ENCODE measurements at regions of chr2 and their contacts with region 1.

Region 1: DNA sequence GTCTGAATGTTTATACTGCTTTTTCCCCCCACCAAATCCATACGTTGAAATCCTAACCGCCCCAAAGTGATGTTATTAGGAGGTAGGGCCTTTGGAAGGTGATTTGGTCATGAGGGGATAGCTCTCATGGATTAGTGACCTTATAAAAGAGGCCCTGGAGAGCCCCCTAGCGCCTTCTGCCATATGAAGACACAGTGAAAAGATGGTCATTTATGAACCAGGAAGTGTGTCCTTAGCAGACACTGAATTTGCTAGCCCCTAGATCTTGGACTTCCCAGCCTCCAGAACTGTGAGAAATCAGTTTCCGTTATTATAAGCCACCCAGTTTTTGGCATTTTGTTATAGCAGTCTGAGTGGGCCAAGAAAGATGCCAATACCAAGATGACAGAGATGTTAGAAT is 7.2 kb upstream of the TSN start:
- DNase-seq: no peak
- H3K4me3 ChIP-seq: no peak overlapping the region
- CTCF ChIP-seq: peak; percentile 3

Region 2: DNA sequence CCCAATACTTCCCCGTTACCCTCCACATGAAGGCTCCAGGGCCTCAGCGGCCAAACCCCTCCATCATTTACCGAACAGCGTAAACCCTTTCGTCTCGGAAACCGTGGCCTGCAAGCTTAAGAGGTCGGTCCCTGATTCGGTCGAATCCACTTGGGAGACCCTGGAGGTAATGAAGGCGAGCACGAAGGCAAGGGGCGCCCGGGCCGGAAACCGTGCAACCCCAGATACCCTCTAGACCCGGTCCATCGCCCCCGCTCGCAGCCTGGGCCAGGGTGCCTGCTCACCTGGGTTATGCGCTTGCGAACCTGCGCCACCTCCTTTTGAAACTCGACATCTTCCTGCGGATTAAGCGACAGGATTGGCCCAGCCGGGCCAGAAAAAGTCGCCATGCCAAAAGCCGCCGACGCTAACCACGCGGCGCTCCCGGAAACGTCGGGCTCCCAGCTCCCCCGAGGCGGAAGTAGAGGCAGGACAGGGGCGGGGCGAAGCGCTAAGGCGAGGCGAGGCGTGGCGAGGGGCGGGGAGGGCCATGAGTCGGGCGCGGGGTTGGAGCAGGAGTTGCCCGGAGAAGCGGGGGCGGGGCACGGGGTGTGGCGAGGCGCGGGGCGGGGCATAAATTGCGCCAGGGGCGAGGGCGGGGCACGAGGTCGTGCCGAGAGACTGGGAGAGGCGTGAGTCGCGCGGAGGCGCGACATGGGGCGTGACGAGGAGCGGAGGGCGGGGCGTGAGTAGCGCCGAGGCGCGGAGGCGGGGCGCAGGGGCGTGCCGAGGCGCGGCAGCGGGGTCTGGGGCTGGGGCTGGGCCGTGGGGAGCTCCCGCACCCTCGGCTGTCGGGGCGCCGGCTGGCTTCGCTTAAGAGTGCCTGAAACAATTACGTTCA is 11.5 kb before region 1 on chr2 and contains the start of gene NIFK:
- CTCF ChIA-PET with region 1: interaction called, 12 read pairs
- POLR2A ChIA-PET with region 1: no interaction called
- DNase-seq: peak; percentile 66
- H3K4me3 ChIP-seq: peak within 1 kb of the TSS; percentile 89
- CTCF ChIP-seq: no peak